ENCODE measurements at regions of chr3 and their contacts with region 1.

Region 1: GRCh38 chr3:8773941-8774542 is 4.6 kb upstream of the OXTR start:
- DNase-seq: peak; percentile 14
- H3K4me3 Mint-ChIP-seq: no peak overlapping the region
- H3K27ac Mint-ChIP-seq: no peak overlapping the region
- H3K4me1 Mint-ChIP-seq: peaks cover 4% of the 10 kb centered on the region
- H3K27me3 Mint-ChIP-seq: peaks cover 19% of the 10 kb centered on the region

Region 2: DNA sequence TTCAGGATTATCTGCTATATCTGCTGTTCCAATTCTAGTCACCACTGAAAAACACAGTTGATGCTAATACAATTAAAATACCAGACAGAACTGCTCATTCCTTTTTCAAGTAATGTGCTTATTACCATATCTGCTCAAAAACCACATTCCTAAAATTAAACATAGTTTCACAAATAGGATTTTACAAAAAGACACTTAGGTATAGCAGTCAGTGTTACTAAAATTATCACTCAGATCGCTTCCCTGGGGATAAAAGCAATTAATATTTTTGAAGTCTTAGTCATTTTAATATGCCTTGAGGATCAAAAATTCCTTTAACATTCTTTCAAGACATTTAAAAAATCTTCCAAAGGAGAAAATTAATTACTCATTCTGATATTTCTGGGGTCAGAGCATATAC is 117.7 kb after region 1 on chr3:
- intact Hi-C with region 1: loop called (anchors 5 kb)
- DNase-seq: no peak
- H3K4me3 Mint-ChIP-seq: no peak overlapping the region
- H3K27ac Mint-ChIP-seq: no peak overlapping the region
- H3K4me1 Mint-ChIP-seq: no peaks in the 10 kb centered on the region
- H3K27me3 Mint-ChIP-seq: no peaks in the 10 kb centered on the region

Measured in activated CD4-positive, alpha-beta T cell treated with anti-CD3 and anti-CD28 coated beads, Interleukin-2, amount 10 ng/mL, durations not matched to agents 24 days and 14 days (primary cell).